ENCODE measurements at regions of chr17 and their contacts with region 1.

Region 1: DNA sequence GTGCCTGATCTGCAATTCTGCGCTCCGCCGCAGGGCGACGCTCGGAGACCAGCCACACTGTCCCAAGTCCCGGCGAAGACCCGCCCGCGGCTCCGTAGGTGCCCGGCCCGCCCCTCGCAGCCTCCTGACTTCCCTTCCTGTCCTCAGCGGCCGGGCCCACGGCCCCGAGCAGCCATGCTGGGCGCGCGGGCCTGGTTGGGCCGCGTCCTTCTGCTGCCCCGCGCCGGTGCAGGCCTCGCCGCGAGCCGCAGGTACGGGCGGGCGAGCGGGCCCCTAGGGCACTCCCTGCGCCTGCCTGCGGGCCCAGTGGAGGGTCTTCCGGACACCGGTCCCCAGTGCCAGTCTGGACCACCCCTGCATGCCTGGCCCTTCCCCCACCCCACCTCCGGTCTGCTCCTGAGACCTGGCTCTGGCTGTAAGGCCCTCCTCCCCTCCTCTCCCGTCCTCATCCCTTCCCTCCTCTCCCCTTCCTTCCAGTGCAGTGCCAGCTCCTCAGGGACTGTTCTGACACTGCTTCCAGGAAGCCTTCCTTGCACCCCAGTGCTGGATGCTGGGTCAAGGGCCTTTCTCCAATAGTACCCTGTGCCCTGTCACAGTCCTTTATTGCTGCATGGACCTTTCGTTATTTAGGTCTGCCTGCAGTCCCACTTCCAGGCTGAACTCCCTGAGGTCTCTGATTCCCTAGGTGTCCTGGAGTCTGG is at the start of gene SPATA20:
- DNase-seq: peak; percentile 94
- ATAC-seq: peak; percentile 87
- total RNA-seq, gene SPATA20: 37.5 TPM

Region 2: DNA sequence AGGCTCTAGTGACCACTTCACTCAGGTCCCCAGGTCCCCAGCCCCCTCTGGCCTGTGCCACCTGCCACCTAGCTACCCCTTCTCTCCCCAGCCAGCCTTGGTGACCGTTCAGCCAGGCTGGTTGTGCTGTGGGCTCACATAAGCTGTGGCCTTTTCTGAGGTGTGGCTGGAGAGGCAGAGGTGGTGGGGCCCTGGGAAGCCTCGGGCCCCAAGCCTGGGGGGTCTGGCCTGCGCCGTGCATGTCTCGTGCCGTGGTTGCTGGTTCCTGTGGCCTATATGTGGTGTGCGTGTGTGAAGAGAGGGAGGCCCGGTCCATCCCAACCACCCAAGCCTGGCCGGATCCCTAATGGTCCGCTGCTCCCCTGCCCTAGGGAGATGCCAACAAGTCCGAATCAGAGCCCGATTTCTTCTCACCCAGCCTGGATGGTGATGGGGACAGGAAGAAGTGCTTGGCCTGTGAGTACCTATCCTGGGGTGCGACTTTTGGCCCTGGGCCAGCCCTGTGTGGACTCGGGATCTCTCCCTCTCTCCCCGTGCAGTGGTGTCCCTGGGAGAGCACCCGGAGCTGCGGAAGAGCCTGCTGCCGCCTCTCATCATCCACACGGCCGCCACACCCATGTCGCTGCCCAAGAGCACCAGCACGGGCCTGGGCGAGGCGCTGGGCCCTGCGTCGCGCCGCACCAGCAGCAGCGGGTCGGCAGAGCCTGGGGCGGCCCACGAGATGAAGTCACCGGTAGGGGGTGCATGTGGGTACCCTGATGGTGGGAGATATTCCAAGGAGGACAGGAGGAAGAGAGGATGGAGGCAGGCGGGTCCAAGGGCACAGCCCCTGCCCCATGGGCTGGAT is 49.2 kb after region 1 on chr17:
- intact Hi-C with region 1: no loop called
- DNase-seq: no peak
- ATAC-seq: no peak

Region 3: DNA sequence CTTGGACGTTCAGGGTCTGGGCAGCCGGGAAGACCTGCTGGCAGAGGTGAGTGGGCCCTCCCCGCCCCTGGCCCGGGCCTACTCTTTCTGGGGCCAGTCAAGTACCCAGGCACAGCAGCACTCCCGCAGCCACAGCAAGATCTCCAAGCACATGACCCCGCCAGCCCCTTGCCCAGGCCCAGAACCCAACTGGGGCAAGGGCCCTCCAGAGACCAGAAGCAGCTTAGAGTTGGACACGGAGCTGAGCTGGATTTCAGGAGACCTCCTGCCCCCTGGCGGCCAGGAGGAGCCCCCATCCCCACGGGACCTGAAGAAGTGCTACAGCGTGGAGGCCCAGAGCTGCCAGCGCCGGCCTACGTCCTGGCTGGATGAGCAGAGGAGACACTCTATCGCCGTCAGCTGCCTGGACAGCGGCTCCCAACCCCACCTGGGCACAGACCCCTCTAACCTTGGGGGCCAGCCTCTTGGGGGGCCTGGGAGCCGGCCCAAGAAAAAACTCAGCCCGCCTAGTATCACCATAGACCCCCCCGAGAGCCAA is 78.9 kb after region 1 on chr17:
- intact Hi-C with region 1: loop called (anchors 5 kb)
- DNase-seq: peak; percentile 81
- ATAC-seq: peak; percentile 71

Region 4: GRCh38 chr17:50681263-50682210 is 134.4 kb after region 1 on chr17:
- intact Hi-C with region 1: loop called (anchors 5 kb)
- DNase-seq: no peak
- ATAC-seq: peak; percentile 82

Region 5: DNA sequence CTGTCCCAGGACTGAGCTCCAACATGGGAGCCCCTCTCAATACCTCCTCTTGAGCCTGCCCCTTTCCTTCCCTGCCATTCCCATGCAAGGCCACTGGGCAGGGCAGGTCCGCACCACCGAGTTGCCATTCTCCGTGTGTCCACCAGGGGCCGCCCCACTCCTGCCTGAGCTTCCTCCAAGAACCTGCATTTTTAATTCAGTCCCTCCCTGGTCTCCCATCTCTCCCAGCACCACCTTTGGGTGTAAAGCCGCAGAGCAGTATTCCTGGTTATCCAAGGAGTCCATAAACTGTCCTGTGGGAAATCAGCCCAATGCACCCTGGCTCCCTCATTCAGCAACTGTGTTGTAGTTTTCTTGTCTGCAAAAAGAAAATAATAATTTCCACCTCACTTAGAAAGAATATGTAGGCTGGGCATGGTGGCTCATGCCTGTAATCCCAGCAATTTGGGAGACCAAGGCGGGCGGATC is 236.0 kb after region 1 on chr17:
- intact Hi-C with region 1: no loop called
- DNase-seq: peak; percentile 91
- ATAC-seq: peak; percentile 91

Region 6: DNA sequence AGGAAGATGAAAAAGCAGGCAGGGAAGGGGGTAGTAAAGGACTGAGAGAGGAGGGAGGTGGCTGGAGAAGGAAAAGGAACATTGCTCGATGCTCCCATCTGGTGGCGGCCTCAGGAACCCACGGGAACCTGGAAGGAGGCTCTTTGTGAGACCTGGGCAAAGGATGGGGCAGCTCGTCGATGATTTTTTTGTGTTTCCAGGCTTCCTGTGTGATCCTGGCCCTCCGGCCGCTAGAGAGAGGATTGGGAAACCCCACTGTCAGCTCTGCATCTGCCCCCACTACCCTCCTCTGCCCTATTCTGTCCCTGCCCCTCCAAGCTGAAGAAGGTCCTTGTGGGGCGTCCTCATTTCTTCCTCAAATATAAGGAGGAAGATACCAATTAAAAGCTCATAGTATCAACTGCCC is 294.8 kb after region 1 on chr17:
- intact Hi-C with region 1: loop called (anchors 5 kb)
- DNase-seq: peak; percentile 87
- ATAC-seq: peak; percentile 84